ENCODE measurements at regions of chr6 and their contacts with region 1.

Region 1: GRCh38 chr6:149028767-149029405 is 282.1 kb downstream of the UST start:
- DNase-seq: peak in 34 of 42 donors; percentile 31 to 90 (median 74)

Region 2: GRCh38 chr6:149513915-149514314 is 485.0 kb after region 1 on chr6:
- intact Hi-C with region 1: loop called (anchors 10 kb)
- DNase-seq: no peak

Measured in head of caudate nucleus (tissue), 42 donors.